Endothelial cell of umbilical vein (primary cell): ENCODE measurements at regions of chr10 and their contacts with region 1.

Region 1: DNA sequence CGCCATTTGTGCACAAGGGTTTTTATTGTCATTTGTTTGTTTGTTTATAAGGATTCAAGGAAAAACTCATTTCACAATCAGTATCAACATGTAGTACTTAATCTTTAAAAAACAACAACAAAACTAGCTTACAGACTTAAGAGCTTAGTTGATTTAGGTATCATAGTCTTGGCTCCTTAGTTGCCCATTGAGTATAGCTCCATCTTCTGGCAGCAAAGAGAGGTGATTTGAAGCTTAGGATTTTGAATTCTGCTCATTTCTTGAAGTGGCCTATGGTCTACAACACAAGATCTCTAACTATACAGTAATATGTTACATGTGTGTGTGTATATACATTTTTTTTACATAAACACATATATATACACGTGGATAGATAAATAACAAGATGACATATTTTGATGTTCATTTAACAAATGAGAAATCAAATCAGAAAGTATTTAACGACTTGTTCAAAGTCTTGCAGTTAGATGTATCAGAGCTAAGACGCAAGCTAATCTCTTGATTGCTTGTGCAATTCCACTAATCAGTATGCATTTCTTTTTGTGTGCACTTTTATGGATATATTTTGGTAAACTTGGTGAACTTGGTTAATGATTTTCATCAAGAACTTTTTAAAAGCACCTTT is 307.3 kb downstream of the CAMK1D start:
- DNase-seq: peak; percentile 58
- H3K4me3 ChIP-seq: no peak overlapping the region
- H3K27ac ChIP-seq: no peak overlapping the region
- H3K4me1 ChIP-seq: no peaks in the 10 kb centered on the region
- H3K27me3 ChIP-seq: peaks cover 0 to 3% of the 10 kb centered on the region in 2 experiments
- CTCF ChIP-seq: peak; percentile 56
- POLR2A ChIP-seq: no peak

Region 2: DNA sequence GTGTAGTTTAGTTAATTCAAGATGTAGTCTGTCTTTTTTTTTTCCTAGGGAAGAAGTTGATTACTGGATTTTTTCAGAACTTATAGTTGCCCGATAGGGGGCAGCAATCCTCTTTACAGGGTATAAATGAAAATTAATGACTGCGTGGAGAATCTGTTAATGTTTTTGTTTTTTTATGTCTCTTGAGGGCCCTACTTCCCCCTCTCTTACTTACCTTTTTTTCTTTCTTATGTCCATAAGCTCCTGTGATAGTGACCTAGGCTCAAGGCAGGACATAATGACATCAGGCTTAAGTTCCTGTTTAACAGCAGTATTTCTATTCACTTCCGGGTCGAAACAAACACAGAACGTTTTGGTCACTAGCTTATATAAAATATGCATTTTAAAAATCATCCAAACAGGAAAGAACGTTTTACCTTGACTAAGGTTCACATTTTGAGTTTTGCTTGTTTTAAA is 441.8 kb before region 1 on chr10:
- CTCF ChIA-PET with region 1: interaction called, 17 read pairs
- POLR2A ChIA-PET with region 1: no interaction called
- dilution Hi-C with region 1: no loop called
- intact Hi-C with region 1: loop called (anchors 1 kb)
- DNase-seq: peak; percentile 65
- H3K4me3 ChIP-seq: no peak overlapping the region
- H3K27ac ChIP-seq: peak overlapping the region; percentile 23
- H3K4me1 ChIP-seq: peaks cover 6% of the 10 kb centered on the region
- H3K27me3 ChIP-seq: no peaks in the 10 kb centered on the region
- CTCF ChIP-seq: peak; percentile 42 to 51
- POLR2A ChIP-seq: no peak

Region 3: DNA sequence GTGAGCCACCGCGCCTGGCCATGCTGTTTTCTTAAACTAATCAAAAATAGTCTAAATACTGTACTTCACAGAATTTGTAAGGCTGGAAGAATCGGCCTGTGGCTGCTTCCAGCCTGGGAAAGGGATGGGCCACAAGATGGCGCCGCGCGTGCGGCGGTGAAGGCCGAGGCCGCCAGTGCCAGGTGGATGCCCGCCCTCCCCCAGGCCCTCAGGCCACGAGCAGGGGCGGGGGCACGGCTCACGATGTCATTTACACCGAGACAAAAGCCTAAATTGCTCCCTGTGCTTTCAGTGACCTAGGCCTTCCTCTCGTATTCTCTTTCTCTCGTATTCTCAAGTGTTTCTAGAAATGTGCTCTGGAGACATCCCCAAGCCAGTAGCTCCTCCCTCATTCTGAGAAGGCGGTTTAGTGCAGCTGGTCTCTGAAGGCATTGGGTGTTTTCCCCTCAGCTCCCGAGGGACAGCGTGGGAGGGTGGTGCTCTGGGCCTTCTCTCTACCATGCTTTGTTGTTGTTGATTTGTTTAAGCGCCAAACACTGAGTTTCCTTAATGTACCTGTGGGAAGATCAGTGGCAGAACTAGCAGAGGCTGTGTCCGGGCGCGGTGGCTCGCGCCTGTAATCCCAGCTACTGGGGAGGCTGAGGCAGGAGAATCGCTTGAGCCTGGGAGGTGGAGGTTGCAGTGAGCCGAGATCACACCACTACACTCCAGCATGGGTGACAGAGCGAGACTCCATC is 392.3 kb before region 1 on chr10:
- CTCF ChIA-PET with region 1: interaction called, 231 read pairs
- POLR2A ChIA-PET with region 1: no interaction called
- dilution Hi-C with region 1: no loop called
- intact Hi-C with region 1: loop called (anchors 1 kb)
- DNase-seq: peak; percentile 73
- H3K4me3 ChIP-seq: peak overlapping the region in 2 of 3 experiments; percentile 13 to 29
- H3K27ac ChIP-seq: no peak overlapping the region
- H3K4me1 ChIP-seq: no peaks in the 10 kb centered on the region
- H3K27me3 ChIP-seq: no peaks in the 10 kb centered on the region
- CTCF ChIP-seq: peak; percentile 70 to 82
- POLR2A ChIP-seq: no peak

Region 4: DNA sequence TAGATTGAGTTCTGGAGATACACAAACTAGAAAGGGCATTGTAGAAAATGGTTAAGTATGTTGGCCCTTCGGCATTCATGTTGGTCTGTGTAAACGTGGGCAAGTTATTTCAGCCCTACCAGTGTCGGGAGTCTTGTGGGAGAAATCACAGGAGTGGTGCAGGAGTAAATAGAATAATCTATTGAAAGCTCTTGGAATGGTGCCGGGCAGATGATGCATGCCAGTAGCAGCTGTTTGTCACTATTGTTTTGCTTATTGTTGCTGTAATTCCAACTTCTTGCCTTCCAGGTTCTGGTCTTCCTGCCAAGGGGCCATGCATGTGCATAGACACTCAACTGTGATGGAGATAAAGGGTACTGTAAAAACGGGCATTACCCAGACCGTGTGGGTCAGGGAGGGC is 47.9 kb before region 1 on chr10:
- CTCF ChIA-PET with region 1: interaction called, 10 read pairs
- POLR2A ChIA-PET with region 1: no interaction called
- dilution Hi-C with region 1: no loop called
- intact Hi-C with region 1: no loop called
- DNase-seq: no peak
- H3K4me3 ChIP-seq: no peak overlapping the region
- H3K27ac ChIP-seq: no peak overlapping the region
- H3K4me1 ChIP-seq: peaks cover 3% of the 10 kb centered on the region
- H3K27me3 ChIP-seq: no peaks in the 10 kb centered on the region
- CTCF ChIP-seq: no peak
- POLR2A ChIP-seq: no peak

Region 5: DNA sequence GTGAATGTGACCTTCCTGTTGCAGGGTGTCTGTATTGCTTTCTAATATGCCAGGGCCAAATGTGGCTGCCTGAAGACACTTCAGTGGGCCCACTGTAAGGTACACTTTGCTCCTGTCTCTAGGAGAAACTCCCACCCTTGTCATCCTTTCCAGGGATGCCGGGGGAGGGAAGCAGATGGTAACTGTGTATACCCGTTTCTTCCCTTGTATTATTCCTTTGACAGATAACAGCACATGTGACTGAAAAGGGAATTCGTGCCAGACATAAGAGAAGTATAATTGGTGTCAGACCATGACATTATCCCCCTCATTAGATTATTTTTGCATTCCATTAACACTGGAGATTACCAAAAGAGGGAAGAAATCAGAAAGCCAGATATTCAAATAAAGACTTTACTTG is 10.4 kb after region 1 on chr10:
- CTCF ChIA-PET with region 1: interaction called, 16 read pairs
- POLR2A ChIA-PET with region 1: no interaction called
- dilution Hi-C with region 1: no loop called
- intact Hi-C with region 1: no loop called
- DNase-seq: no peak
- H3K4me3 ChIP-seq: no peak overlapping the region
- H3K27ac ChIP-seq: no peak overlapping the region
- H3K4me1 ChIP-seq: no peaks in the 10 kb centered on the region
- H3K27me3 ChIP-seq: peaks cover 0 to 2% of the 10 kb centered on the region in 2 experiments
- CTCF ChIP-seq: no peak
- POLR2A ChIP-seq: no peak

Region 6: DNA sequence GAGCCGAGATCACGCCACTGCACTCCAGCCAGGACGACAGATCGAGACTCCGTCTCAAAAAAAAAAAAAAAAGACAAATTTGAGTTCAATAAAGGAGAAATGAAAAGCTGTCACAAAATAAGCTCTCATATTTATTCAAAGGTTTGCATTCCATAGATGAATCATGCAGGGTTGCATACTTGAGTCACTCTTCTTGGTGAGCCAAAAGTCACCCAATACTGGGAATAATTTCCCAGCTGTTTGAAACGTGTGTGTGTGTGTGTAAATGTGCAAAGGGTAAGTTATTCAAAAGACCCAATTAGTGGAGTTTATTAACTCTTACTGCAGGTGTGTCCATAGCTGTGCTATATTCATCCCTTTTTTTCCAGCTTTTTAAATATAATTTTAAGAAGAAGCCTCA is 47.2 kb after region 1 on chr10:
- CTCF ChIA-PET with region 1: interaction called, 30 read pairs
- POLR2A ChIA-PET with region 1: no interaction called
- dilution Hi-C with region 1: no loop called
- intact Hi-C with region 1: no loop called
- DNase-seq: peak; percentile 72
- H3K4me3 ChIP-seq: no peak overlapping the region
- H3K27ac ChIP-seq: peak overlapping the region; percentile 28
- H3K4me1 ChIP-seq: peaks cover 52% of the 10 kb centered on the region
- H3K27me3 ChIP-seq: no peaks in the 10 kb centered on the region
- CTCF ChIP-seq: no peak
- POLR2A ChIP-seq: no peak

Region 7: DNA sequence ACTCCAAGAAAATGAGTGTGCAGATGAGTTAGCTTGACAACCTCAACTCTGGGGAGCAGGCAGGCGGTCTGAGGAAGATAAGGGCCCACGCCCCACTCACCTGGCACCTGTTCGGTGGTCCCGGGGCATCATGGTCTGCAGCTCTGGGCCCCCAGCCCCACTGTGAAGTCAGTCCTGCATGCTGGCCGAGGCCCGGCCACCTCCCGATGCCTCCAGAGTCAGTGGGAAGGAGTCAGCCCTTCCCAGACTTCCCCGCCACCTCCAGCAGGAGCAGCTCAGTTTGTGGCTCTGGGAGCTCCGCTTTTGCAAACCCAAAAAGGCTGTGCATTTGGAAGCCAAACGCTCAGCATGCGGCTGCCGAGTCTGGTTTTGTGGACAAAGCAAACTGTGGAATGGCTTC is 177.5 kb after region 1 on chr10:
- CTCF ChIA-PET with region 1: no interaction called
- POLR2A ChIA-PET with region 1: no interaction called
- dilution Hi-C with region 1: no loop called
- intact Hi-C with region 1: no loop called
- DNase-seq: no peak
- H3K4me3 ChIP-seq: no peak overlapping the region
- H3K27ac ChIP-seq: no peak overlapping the region
- H3K4me1 ChIP-seq: peaks cover 3% of the 10 kb centered on the region
- H3K27me3 ChIP-seq: no peaks in the 10 kb centered on the region
- CTCF ChIP-seq: no peak
- POLR2A ChIP-seq: no peak

Region 8: GRCh38 chr10:12844811-12845533 is 188.3 kb after region 1 on chr10:
- CTCF ChIA-PET with region 1: no interaction called
- POLR2A ChIA-PET with region 1: no interaction called
- dilution Hi-C with region 1: no loop called
- intact Hi-C with region 1: no loop called
- DNase-seq: peak; percentile 98
- H3K4me3 ChIP-seq: peak overlapping the region in 1 of 3 experiments; percentile 12
- H3K27ac ChIP-seq: peak overlapping the region; percentile 96
- H3K4me1 ChIP-seq: peaks cover 31% of the 10 kb centered on the region
- H3K27me3 ChIP-seq: no peaks in the 10 kb centered on the region
- CTCF ChIP-seq: no peak
- POLR2A ChIP-seq: peak; percentile 56

Region 9: GRCh38 chr10:13074561-13075451 is 418.2 kb after region 1 on chr10:
- CTCF ChIA-PET with region 1: interaction called, 17 read pairs
- POLR2A ChIA-PET with region 1: no interaction called
- dilution Hi-C with region 1: no loop called
- intact Hi-C with region 1: loop called (anchors 5 kb)
- DNase-seq: peak; percentile 61
- H3K4me3 ChIP-seq: no peak overlapping the region
- H3K27ac ChIP-seq: no peak overlapping the region
- H3K4me1 ChIP-seq: no peaks in the 10 kb centered on the region
- H3K27me3 ChIP-seq: peaks cover 5 to 7% of the 10 kb centered on the region in 2 experiments
- CTCF ChIP-seq: peak; percentile 83
- POLR2A ChIP-seq: no peak

Region 10: DNA sequence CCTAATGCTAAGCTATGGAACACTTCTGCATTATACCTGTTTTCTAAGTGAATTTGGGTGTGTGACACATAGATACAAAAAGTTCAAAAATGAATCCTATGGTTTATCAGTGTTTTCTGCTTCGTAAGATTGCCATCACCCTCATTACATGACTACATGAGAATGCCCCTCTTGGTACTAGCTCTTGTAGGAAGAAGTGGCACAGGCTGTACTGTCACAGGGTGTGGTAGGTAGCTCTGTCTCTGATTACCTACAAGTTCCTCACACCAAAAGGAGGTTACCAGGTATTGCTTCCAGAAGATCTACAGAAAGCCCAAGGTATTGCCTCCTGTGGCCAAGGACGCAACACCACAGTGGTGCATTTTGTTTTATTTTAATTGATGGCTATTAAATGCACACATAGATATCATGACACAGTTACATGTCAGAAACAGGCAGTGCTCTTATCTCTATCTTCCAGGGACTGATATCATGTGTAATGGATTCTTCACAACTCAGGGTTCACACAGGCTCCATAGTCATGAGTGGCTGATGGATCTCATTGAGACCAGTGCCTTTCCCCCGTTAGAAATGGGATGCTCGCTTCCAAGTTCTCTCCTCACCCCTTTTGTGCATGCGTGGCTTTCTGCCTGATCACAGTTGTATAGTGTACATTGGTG is 449.9 kb after region 1 on chr10:
- CTCF ChIA-PET with region 1: no interaction called
- POLR2A ChIA-PET with region 1: no interaction called
- dilution Hi-C with region 1: no loop called
- intact Hi-C with region 1: no loop called
- DNase-seq: no peak
- H3K4me3 ChIP-seq: no peak overlapping the region
- H3K27ac ChIP-seq: no peak overlapping the region
- H3K4me1 ChIP-seq: peaks cover 6% of the 10 kb centered on the region
- H3K27me3 ChIP-seq: no peaks in the 10 kb centered on the region
- CTCF ChIP-seq: no peak
- POLR2A ChIP-seq: no peak